ENCODE measurements at regions of chr2 and their contacts with region 1.

Region 1: DNA sequence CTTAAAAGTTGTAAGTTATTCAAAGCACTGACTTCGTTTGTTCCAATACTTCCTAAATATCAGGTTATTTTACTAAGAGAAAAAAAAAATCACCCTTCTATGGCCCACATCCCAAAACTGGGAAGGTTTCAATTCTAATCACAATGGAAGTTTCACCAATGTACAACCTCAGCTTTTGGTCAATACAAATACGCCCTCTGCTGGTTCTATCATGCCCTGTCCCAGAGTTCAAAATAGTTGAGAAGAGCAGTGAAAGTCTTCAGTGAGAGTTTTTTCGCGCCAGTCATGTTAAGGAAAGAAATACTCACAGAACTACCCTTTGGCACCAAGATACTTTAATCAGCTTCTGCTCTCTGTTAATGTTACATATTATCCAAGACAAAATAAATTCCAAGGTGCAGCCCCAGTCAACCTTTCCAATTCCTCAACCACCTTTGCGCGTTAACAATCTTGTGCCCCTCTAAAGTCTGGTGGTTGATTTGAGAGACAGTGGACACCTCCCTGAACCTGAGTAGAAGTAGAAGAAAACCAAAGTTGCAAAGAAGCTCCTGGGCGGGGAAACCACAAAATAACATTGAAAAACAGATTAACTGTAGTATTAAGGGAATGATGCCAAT is 59.9 kb downstream of the SUMO1 start:
- DNase-seq: peak; percentile 71 to 78
- H3K4me3 ChIP-seq: no peak overlapping the region
- H3K4me1 ChIP-seq: no peaks in the 10 kb centered on the region
- H3K27me3 ChIP-seq: no peaks in the 10 kb centered on the region

Region 2: GRCh38 chr2:201257956-201258665 is 920.3 kb before region 1 on chr2:
- in situ Hi-C with region 1: loop called (anchors 25 kb)
- DNase-seq: peak in 1 of 2 experiments; percentile 18
- H3K4me3 ChIP-seq: no peak overlapping the region
- H3K4me1 ChIP-seq: peaks cover 16% of the 10 kb centered on the region
- H3K27me3 ChIP-seq: no peaks in the 10 kb centered on the region

Region 3: GRCh38 chr2:201780674-201781581 is 397.5 kb before region 1 on chr2 and contains the start of gene ALS2:
- in situ Hi-C with region 1: loop called (anchors 25 kb)
- DNase-seq: peak; percentile 93 to 98
- H3K4me3 ChIP-seq: peak within 1 kb of the TSS; percentile 77
- H3K4me1 ChIP-seq: peaks cover 27% of the 10 kb centered on the region
- H3K27me3 ChIP-seq: no peaks in the 10 kb centered on the region

Measured in HAP-1 (cell line).